GM10248 (cell line): ENCODE measurements at regions of chr18 and their contacts with region 1.

Region 1: GRCh38 chr18:57898506-57899124 is 95.5 kb upstream of the ATP8B1 start:
- DNase-seq: no peak
- CTCF ChIP-seq: no peak

Region 2: DNA sequence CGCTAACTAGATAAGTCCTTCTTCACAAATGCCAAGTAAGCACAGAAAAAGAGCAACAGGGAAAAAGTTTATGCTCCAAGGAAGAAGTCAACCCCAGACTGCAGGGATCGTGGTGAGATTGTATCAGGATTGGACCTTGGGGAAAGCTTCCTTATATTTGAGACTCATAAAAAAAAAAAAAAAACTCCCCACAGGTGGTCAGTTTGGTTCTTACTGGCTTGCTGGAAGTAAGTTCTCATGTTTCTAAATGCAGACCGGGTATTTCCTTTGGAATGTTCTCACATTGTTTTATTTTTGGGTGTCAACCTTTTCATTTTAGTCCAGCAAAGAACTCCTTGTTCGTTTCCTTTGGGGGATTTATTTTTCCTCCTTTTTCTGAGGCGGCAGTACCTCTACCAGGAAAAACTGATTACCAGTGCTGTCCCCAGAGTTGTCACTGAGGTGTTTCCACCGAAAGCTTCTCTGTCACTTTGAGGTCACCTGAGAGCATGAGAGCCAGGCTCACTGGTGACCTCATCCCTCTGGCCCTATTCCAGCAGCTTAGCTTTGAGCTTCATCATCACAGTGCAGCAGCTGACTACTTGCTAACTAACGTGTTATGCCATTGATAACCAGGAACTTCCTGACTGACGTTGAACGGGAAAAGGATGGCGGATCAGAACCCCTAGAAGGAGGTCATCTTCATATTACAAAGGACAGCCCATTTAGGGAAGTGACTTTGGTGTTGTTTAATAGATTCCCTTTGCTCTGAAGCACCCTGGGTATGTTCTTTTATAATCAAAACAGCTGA is 78.7 kb before region 1 on chr18:
- CTCF ChIA-PET with region 1: no interaction called
- POLR2A ChIA-PET with region 1: no interaction called
- DNase-seq: no peak
- CTCF ChIP-seq: no peak

Region 3: GRCh38 chr18:57881818-57882413 is 16.7 kb before region 1 on chr18:
- CTCF ChIA-PET with region 1: interaction called, 10 read pairs
- POLR2A ChIA-PET with region 1: no interaction called
- DNase-seq: peak; percentile 62
- CTCF ChIP-seq: peak; percentile 86

Region 4: GRCh38 chr18:57910817-57911216 is 12.2 kb after region 1 on chr18:
- CTCF ChIA-PET with region 1: interaction called, 19 read pairs
- POLR2A ChIA-PET with region 1: interaction called, 3 read pairs
- DNase-seq: peak; percentile 38
- CTCF ChIP-seq: peak; percentile 31